ENCODE measurements at regions of chr19 and their contacts with region 1.

Region 1: DNA sequence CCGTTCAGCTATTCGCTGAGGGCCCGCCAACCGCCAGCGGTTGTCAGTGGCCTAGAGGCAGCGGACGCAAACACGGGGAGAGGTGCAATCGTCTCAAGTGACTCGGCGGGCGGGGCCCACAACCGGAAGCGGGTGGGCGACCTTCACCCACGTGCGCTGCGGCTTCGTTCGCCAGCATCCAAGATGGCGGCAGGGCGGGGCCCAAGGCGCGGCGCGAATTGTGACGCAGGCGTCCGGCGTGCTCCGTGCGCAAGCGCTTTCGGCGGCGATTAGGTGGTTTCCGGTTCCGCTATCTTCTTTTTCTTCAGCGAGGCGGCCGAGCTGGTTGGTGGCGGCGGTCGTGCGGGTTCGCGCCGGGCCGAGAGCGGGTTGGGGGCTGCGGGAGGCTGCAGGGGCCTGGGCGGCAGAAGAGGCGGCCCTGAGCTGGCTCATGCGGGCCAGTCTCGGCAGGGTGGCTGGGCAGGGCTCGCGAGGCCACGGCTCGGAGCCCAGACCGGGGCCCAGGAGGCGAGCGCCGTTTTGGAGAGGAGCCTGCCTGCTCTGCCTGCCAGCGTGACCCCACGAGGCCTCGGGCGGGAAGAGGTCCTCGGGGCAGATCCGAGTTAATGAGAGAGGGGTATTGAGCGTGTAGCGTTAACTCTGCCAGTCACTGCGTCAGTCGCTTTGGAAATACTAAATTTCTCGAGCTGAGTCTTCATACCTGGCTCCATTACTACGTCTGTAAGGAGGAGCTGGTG is at the start of gene UBA52:
- DNase-seq: peak; percentile 97 to 98
- ATAC-seq: peak; percentile 94 to 95
- H3K4me3 ChIP-seq: peak within 1 kb of the TSS; percentile 78 to 90 (median 82)
- H3K27ac ChIP-seq: peak within 1 kb of the TSS; percentile 88 to 98 (median 94)
- H3K4me1 ChIP-seq: peaks cover 10 to 16% of the 10 kb centered on the region in 2 donors
- H3K27me3 ChIP-seq: no peaks in the 10 kb centered on the region
- CTCF ChIP-seq: peak in 1 of 5 experiments; percentile 6
- POLR2A ChIP-seq: peak; percentile 95 to 98
- total RNA-seq, gene UBA52: 512 to 719 (median 537) TPM

Region 2: GRCh38 chr19:18557474-18558201 is 14.1 kb before region 1 on chr19 and contains the start of gene KXD1:
- in situ Hi-C with region 1: no loop called
- intact Hi-C with region 1: loop called (anchors 1 kb)
- DNase-seq: peak; percentile 98
- ATAC-seq: peak; percentile 99 to 100
- H3K4me3 ChIP-seq: peak within 1 kb of the TSS; percentile 82 to 91 (median 88)
- H3K27ac ChIP-seq: peak within 1 kb of the TSS; percentile 95 to 98 (median 96)
- H3K4me1 ChIP-seq: peaks cover 0 to 17% of the 10 kb centered on the region in 2 donors
- H3K27me3 ChIP-seq: no peaks in the 10 kb centered on the region
- CTCF ChIP-seq: no peak
- POLR2A ChIP-seq: peak; percentile 86 to 92
- total RNA-seq, gene KXD1: 97.1 to 155 (median 106) TPM

Region 3: DNA sequence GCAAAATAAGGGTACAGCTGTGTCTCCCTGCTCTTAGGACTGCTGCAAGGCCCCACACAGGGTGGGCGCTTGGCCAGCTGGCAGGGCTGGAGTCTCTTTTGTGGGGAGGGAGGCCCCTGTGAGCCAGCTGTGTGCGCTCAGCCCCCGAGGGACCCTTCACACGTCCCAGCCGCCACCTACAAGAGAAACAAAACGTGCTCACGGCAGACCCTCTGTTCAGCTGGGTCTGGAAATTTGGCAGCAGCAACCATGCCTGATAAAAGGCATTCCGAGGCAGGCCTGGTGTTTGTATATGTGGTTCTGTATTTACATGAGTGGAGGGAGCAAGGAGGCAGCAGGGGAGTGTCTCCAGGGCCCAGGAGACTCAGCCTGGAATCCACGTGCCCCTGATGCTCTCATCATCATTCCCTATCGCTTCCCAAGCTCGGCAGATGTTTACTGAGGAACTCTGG is 161.5 kb after region 1 on chr19:
- in situ Hi-C with region 1: no loop called
- intact Hi-C with region 1: no loop called
- DNase-seq: no peak
- ATAC-seq: peak in 1 of 2 donors; percentile 44
- H3K4me3 ChIP-seq: no peak overlapping the region
- H3K27ac ChIP-seq: no peak overlapping the region
- H3K4me1 ChIP-seq: no peaks in the 10 kb centered on the region
- H3K27me3 ChIP-seq: no peaks in the 10 kb centered on the region
- CTCF ChIP-seq: no peak
- POLR2A ChIP-seq: no peak

Region 4: GRCh38 chr19:18940769-18941407 is 369.2 kb after region 1 on chr19 and contains the start of gene HOMER3:
- in situ Hi-C with region 1: no loop called
- intact Hi-C with region 1: loop called (anchors 2 kb)
- DNase-seq: peak; percentile 57 to 74
- ATAC-seq: peak; percentile 67 to 78
- H3K4me3 ChIP-seq: peak within 1 kb of the TSS; percentile 67 to 93 (median 78)
- H3K27ac ChIP-seq: peak within 1 kb of the TSS; percentile 87 to 98 (median 94)
- H3K4me1 ChIP-seq: peaks cover 12 to 18% of the 10 kb centered on the region in 2 donors
- H3K27me3 ChIP-seq: no peaks in the 10 kb centered on the region
- CTCF ChIP-seq: peak in 2 of 5 experiments; percentile 42 to 65
- POLR2A ChIP-seq: peak; percentile 61 to 70
- total RNA-seq, gene HOMER3: 86.2 to 202 (median 113) TPM